Endothelial cell of umbilical vein (primary cell): ENCODE measurements at regions of chr4 and their contacts with region 1.

Region 1: DNA sequence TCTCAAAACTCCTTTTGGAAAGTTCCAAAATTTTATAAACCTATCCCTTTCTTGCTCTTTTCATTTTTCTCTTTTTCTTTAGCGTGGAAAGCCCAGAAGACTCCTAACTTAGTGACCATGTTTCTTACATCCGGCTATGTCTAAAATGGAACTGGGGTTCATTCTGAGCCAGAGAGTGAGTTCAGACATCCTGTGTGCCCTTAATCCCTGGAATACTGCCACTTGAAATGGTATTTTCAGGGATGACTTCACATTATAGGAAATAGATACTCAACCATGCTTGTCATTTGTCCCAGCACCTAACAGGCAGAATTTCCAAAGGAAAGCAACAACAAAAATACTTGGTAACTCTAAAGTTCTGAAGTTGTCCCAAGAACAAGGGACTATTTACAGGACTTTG is 379.6 kb downstream of the ARHGAP24 start:
- DNase-seq: peak; percentile 44
- H3K4me3 ChIP-seq: no peak overlapping the region
- H3K27ac ChIP-seq: peak overlapping the region; percentile 11
- H3K4me1 ChIP-seq: peaks cover 16% of the 10 kb centered on the region
- H3K27me3 ChIP-seq: no peaks in the 10 kb centered on the region
- CTCF ChIP-seq: no peak
- POLR2A ChIP-seq: no peak

Region 2: DNA sequence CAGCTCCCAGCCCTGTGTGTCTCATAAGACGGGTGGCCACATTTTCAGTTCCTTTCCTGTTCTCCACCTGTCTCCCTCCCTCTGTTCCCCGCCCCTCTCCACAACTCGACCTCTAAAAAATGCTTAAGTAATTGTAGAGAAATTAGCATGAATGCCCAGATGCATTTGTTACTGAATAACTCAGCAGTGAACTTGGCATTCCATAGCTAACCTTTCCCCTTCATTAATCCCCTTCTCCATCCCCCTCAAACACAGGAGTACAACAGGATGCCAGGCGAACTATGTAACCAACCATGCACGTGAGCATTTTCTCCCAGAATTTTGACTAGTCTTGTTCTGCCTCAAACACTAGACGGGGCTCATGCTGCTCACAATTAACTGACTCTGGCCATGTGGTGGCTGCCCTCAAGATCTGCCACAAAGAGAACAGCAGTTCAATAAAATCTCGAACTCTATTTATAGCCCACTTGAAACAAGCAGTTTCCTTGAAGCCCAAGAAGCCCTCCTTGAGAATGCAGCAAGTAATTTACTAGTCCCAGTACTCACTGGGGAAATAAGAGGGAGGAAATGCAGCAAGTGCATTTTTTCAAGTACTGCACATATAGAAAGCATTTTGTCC is 28.4 kb before region 1 on chr4:
- CTCF ChIA-PET with region 1: no interaction called
- POLR2A ChIA-PET with region 1: no interaction called
- dilution Hi-C with region 1: no loop called
- intact Hi-C with region 1: no loop called
- DNase-seq: peak; percentile 66
- H3K4me3 ChIP-seq: no peak overlapping the region
- H3K27ac ChIP-seq: peak overlapping the region; percentile 48
- H3K4me1 ChIP-seq: peaks cover 52% of the 10 kb centered on the region
- H3K27me3 ChIP-seq: no peaks in the 10 kb centered on the region
- CTCF ChIP-seq: no peak
- POLR2A ChIP-seq: no peak

Region 3: GRCh38 chr4:85869181-85869580 is 14.6 kb after region 1 on chr4:
- CTCF ChIA-PET with region 1: interaction called, 3 read pairs
- POLR2A ChIA-PET with region 1: no interaction called
- dilution Hi-C with region 1: no loop called
- intact Hi-C with region 1: loop called (anchors 1 kb)
- DNase-seq: peak; percentile 59
- H3K4me3 ChIP-seq: no peak overlapping the region
- H3K27ac ChIP-seq: peak overlapping the region; percentile 45
- H3K4me1 ChIP-seq: peaks cover 26% of the 10 kb centered on the region
- H3K27me3 ChIP-seq: no peaks in the 10 kb centered on the region
- CTCF ChIP-seq: no peak
- POLR2A ChIP-seq: no peak

Region 4: DNA sequence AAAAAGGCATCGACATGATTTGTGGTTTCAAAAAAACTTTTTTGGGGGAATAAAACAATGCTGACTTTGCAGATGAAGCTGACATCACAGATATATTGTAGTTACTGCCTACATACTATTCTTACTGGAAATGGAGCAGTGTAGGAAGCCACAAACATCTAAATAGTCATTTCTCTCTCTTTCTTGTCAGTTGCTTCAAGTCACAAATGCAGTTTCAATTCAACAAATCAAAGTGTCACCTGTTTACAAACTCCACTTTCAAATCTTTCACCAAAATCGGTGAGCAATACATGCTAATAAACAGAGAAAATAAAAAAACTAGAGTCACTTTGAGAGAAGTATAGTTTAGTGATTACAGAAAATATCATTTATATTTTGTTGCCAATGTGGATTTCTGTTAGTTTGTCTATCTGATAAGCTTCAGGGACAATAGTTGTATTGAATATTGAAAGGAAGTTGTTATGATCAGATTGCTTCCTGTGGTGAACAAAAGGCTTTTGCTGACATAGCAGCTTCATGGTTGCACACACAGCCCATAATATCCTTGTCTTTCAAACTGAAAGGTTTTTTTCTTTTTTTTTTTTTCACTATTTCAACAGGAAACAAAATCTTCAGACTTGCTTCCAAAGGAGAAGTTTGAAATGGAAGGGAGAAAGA is 689.9 kb after region 1 on chr4:
- CTCF ChIA-PET with region 1: no interaction called
- POLR2A ChIA-PET with region 1: no interaction called
- dilution Hi-C with region 1: no loop called
- intact Hi-C with region 1: no loop called
- DNase-seq: no peak
- H3K4me3 ChIP-seq: no peak overlapping the region
- H3K27ac ChIP-seq: no peak overlapping the region
- H3K4me1 ChIP-seq: no peaks in the 10 kb centered on the region
- H3K27me3 ChIP-seq: peaks cover 18 to 41% of the 10 kb centered on the region in 2 experiments
- CTCF ChIP-seq: no peak
- POLR2A ChIP-seq: no peak